AG04450 (cell line): ENCODE measurements at regions of chr11 and their contacts with region 1.

Region 1: DNA sequence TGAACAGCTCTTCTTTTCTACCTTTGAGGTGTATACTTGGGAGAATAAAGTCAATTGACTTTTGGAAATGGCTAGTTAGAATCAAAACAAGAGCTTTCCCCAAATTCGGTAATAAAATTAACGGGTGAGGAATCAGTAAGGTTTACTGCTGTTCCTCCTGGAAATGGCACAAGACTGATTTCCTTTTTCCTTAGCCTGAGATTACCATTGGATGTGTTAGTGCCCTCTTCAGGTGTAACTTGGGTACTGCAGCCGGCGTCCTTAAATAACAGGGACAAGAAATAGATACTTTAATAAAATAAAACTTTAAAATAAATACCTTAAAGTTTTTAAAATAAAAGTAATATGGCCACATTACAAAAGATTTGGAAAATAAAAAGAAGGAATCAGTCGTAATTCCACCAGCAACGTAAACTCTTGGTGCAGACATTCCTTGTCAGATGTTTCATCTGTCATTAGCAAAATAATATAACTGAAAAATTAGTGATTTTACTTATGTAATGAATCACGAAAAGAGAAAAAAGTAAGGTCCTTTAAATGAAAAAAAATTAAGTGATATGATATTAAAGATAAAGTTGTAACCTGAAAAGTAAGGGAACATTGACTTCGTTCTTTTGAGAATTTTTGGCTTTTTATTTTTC is 29.7 kb downstream of the ZFTA start:
- DNase-seq: peak; percentile 66
- H3K4me3 ChIP-seq: no peak overlapping the region
- H3K27ac ChIP-seq: no peak overlapping the region
- H3K27me3 ChIP-seq: no peaks in the 10 kb centered on the region
- CTCF ChIP-seq: peak; percentile 96

Region 2: DNA sequence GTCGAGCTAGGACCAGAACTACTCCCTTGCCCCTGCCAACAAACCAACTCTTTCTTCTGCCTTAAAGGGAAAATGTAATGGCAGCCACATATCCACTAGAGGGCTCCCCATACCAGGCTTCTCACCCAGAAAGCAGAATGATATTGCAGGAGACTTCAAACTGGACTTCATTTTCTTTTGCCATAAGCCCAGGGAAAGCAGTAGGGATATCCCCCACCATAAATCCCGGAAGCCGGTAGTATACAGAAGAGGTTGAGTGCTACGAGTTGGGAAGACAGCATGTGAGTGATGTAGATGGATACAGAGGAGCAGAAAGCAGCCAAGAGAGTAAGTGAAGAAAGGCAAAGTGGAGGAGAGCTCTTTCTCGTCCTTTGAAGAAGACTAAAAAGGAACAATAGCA is 259.9 kb before region 1 on chr11:
- CTCF ChIA-PET with region 1: interaction called, 29 read pairs
- POLR2A ChIA-PET with region 1: no interaction called
- DNase-seq: peak; percentile 53
- H3K4me3 ChIP-seq: no peak overlapping the region
- H3K27ac ChIP-seq: no peak overlapping the region
- H3K27me3 ChIP-seq: no peaks in the 10 kb centered on the region
- CTCF ChIP-seq: peak; percentile 96

Region 3: GRCh38 chr11:63643205-63643604 is 95.6 kb before region 1 on chr11:
- CTCF ChIA-PET with region 1: interaction called, 76 read pairs
- POLR2A ChIA-PET with region 1: no interaction called
- DNase-seq: no peak
- H3K4me3 ChIP-seq: no peak overlapping the region
- H3K27ac ChIP-seq: no peak overlapping the region
- H3K27me3 ChIP-seq: no peaks in the 10 kb centered on the region
- CTCF ChIP-seq: no peak

Region 4: DNA sequence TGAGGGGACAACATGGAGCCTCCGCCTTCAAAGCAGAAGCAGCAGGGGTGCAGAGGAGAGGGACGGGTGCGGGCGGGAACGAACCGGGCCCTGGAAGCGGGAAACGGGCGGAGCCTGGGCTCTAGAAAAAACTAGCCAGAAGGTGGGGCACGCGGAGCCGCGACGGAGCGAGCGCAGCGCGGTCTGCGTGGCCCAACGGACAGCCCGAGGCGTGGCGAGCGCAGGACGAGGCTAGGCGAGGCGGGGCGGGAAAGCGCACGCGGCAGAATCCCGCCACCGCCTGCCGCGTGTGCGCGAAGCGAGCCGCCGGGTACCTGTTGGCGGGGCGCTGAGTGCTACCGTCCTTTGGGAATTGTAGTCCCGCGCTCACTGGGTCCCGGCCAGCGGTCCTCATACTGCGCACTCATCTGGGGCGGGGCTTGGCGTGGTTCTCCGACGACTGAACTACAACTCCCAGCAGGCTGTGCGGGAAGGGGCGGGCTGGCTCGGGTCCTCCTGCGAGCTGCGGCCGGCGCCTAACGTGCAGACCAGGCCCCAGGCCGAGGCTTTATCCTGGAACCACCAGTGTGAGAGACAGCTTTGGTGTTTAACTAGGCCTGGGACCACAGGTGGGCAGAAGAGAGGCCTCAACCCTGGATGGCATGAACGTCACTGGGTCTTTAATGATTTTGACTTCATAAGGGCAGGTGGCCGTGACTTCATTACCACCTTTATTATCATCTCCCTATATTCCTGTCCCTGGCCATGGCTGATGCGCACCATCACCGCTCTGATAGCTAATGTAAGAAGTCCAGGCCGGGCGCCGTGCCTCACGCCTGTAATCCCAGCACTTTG is 67.3 kb before region 1 on chr11 and contains the start of gene ATL3:
- CTCF ChIA-PET with region 1: interaction called, 13 read pairs
- POLR2A ChIA-PET with region 1: interaction called, 5 read pairs
- DNase-seq: peak; percentile 88
- H3K4me3 ChIP-seq: peak within 1 kb of the TSS; percentile 82
- H3K27ac ChIP-seq: peak within 1 kb of the TSS; percentile 77
- H3K27me3 ChIP-seq: no peaks in the 10 kb centered on the region
- CTCF ChIP-seq: peak; percentile 22; the same call in 1 of the 2 replicates
- polyA plus RNA-seq, gene ATL3: 41.1 and 52.3 TPM in 2 replicates

Region 5: GRCh38 chr11:63705526-63705925 is 33.3 kb before region 1 on chr11:
- CTCF ChIA-PET with region 1: interaction called, 20 read pairs
- POLR2A ChIA-PET with region 1: no interaction called
- DNase-seq: no peak
- H3K4me3 ChIP-seq: no peak overlapping the region
- H3K27ac ChIP-seq: no peak overlapping the region
- H3K27me3 ChIP-seq: no peaks in the 10 kb centered on the region
- CTCF ChIP-seq: no peak

Region 6: GRCh38 chr11:63719977-63720376 is 18.9 kb before region 1 on chr11:
- CTCF ChIA-PET with region 1: interaction called, 32 read pairs
- POLR2A ChIA-PET with region 1: no interaction called
- DNase-seq: peak; percentile 18
- H3K4me3 ChIP-seq: no peak overlapping the region
- H3K27ac ChIP-seq: no peak overlapping the region
- H3K27me3 ChIP-seq: no peaks in the 10 kb centered on the region
- CTCF ChIP-seq: no peak